B cell (primary cell): ENCODE measurements at regions of chr7 and their contacts with region 1.

Region 1: DNA sequence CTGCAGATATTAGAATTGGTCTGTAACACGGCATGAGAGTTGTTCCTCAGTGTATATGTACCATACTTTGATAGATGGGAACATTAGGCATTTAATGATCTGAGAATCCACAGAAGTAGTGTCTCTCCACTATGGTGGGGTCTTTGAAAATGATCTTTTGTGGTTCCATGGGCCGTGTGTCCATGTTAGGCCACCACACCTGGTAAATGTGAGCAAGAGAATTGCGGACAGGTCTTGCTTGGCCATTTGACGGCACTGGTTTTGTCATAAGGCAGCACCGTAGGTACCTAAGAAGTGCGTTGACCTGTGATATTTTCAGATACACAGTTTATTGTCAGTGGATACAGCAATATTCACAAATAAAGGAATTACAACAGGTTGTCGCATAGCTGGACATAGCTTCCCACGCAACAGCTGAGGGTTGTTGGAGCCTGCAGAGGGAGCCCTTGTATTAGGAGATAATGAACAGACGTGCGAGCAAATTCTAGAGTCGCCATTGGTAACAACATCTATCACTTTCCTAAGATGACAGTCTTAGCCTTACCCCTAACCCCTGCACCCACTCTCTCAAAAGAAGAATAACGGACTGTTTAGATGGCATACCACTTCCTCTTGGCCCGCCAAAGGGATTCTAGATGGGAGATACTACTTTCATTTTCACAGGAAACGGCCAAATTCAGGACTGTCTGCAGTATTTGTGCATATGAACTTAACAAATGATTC is 111.4 kb downstream of the COL28A1 start:
- DNase-seq: peak; percentile 61
- ATAC-seq: peak; percentile 68
- H3K4me3 ChIP-seq: peak overlapping the region; percentile 36 to 66 (median 51)
- H3K4me3 Mint-ChIP-seq: peak overlapping the region; percentile 92
- H3K27ac ChIP-seq: peak overlapping the region in 1 of 2 donors; percentile 28
- H3K27ac Mint-ChIP-seq: peak overlapping the region; percentile 64
- H3K4me1 ChIP-seq: no peaks in the 10 kb centered on the region
- H3K4me1 Mint-ChIP-seq: peaks cover 10% of the 10 kb centered on the region
- H3K27me3 ChIP-seq: no peaks in the 10 kb centered on the region
- H3K27me3 Mint-ChIP-seq: no peaks in the 10 kb centered on the region
- CTCF ChIP-seq: peak; percentile 58

Region 2: DNA sequence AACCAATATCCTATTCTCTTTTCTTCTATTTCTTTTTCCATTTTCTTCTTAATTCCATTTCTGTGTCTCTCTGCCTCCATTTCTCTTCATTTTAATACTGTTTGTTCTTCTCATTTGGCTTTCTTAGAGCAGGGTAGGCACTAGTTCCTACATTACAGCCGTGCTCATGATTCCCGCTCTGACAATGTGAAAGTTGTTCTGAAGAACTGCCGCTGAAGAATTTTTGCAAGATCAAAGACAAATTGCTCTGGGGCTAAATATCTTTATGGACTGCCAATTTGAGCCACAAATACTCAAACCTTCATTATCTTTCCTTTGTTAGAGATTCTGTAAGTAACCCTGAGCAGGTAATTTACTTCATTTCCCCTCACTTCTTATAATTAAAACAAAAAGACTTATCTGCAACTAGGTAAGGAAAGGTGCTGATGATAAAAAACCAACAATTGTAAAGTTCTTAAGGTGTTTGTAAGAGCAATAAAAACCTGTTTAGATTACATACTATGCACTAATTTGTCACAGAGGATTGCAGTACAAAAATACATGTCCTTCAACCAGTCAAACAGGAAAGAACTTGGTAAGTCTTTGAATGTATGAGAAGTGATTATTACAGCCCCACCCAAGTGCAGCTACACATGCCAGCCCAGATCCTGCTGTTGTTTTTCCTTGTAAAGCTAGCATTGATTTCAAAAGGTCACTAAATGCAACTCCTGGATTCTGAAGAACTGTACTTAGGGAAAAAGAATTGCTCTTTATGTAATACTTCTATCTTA is 16.1 kb before region 1 on chr7:
- CTCF ChIA-PET with region 1: no interaction called
- POLR2A ChIA-PET with region 1: no interaction called
- intact Hi-C with region 1: no loop called
- DNase-seq: no peak
- ATAC-seq: no peak
- H3K4me3 ChIP-seq: no peak overlapping the region
- H3K4me3 Mint-ChIP-seq: no peak overlapping the region
- H3K27ac ChIP-seq: no peak overlapping the region
- H3K27ac Mint-ChIP-seq: no peak overlapping the region
- H3K4me1 ChIP-seq: no peaks in the 10 kb centered on the region
- H3K4me1 Mint-ChIP-seq: no peaks in the 10 kb centered on the region
- H3K27me3 ChIP-seq: no peaks in the 10 kb centered on the region
- H3K27me3 Mint-ChIP-seq: peaks cover 3% of the 10 kb centered on the region
- CTCF ChIP-seq: no peak

Region 3: GRCh38 chr7:7542251-7542835 is 118.0 kb after region 1 on chr7:
- CTCF ChIA-PET with region 1: interaction called, 19 read pairs
- POLR2A ChIA-PET with region 1: no interaction called
- intact Hi-C with region 1: loop called (anchors 2 kb)
- DNase-seq: no peak
- ATAC-seq: no peak
- H3K4me3 ChIP-seq: no peak overlapping the region
- H3K4me3 Mint-ChIP-seq: no peak overlapping the region
- H3K27ac ChIP-seq: no peak overlapping the region
- H3K27ac Mint-ChIP-seq: no peak overlapping the region
- H3K4me1 ChIP-seq: no peaks in the 10 kb centered on the region
- H3K4me1 Mint-ChIP-seq: no peaks in the 10 kb centered on the region
- H3K27me3 ChIP-seq: no peaks in the 10 kb centered on the region
- H3K27me3 Mint-ChIP-seq: no peaks in the 10 kb centered on the region
- CTCF ChIP-seq: no peak